IMR-90 (cell line): ENCODE measurements at regions of chr7 and their contacts with region 1.

Region 1: DNA sequence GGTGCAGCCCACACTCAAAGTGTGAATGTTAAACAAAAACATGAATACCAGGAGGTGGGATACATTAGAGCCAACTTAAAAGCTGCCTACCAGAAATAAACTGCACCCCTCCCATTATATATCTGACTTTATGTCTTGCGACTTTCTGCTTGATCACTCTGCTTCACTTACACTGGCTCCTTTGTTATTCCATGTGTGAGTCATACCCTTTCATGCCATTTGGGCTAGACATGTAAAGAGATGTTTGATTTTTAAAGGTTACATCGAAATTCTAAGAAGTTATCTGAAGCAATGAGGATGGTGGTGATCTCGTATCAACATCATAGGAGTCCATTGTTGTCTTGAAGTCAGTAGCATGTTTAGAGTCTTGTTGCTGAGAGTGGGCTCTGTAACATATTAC is 31.6 kb upstream of the ETV1 start:
- DNase-seq: peak; percentile 84
- ATAC-seq: peak; percentile 86
- H3K4me3 ChIP-seq: no peak overlapping the region
- H3K27ac ChIP-seq: no peak overlapping the region
- H3K4me1 ChIP-seq: peaks cover 5% of the 10 kb centered on the region
- H3K27me3 ChIP-seq: no peaks in the 10 kb centered on the region
- CTCF ChIP-seq: no peak
- POLR2A ChIP-seq: no peak
- RAD21 ChIP-seq: no peak

Region 2: DNA sequence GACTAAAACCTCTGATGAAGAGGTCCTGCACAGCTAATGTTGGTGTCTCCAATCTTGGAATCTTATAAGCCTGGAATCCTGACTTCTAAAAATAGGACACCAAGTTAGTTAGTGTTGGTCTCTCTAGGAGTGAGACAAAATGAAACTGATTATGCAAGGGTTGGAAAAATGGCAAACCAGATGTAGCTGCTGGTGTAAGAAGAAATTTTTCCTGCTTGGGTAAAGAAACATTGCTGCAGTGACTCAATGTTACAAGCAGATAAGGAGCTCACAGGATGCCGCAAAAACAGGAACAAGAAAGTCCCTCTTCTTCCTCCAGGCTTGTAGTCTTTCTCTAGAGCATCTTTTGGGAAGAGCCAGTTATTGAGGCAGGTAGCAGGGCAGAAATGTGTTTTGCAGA is 480.6 kb before region 1 on chr7:
- CTCF ChIA-PET with region 1: no interaction called
- POLR2A ChIA-PET with region 1: no interaction called
- dilution Hi-C with region 1: no loop called
- in situ Hi-C with region 1: loop called (anchors 25 kb)
- intact Hi-C with region 1: no loop called
- DNase-seq: peak; percentile 81
- ATAC-seq: peak; percentile 72
- H3K4me3 ChIP-seq: no peak overlapping the region
- H3K27ac ChIP-seq: no peak overlapping the region
- H3K4me1 ChIP-seq: no peaks in the 10 kb centered on the region
- H3K27me3 ChIP-seq: no peaks in the 10 kb centered on the region
- CTCF ChIP-seq: no peak
- POLR2A ChIP-seq: no peak
- RAD21 ChIP-seq: no peak